ENCODE measurements at regions of chr13 and their contacts with region 1.

Region 1: DNA sequence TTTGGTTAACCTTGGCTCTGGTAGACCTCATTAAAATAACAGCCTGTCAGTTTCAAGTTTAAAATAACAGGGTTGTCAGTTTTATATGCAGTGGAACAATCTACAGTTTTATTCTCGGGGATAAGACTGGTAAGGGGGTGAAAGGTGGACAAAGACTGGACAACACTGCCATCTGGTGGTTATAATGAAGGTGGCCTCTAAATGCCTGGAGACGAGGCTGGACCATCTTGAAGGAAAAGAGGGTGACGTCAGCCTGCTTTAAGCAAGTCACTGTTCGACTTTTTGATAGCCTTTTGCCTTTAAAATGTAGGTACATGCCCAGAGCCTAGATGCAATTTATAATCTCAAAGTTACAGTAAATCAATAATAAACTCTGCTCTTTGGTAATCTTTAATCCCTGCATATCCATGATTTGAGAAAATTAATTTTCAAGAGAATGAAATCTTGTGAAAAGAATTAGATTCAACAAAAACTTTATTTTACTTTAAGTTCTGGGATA is 117.0 kb downstream of the DCT start:
- DNase-seq: peak in 9 of 10 donors; percentile 20 to 83 (median 62)

Region 2: GRCh38 chr13:94182185-94182761 is 180.2 kb before region 1 on chr13:
- intact Hi-C with region 1: loop called (anchors 5 kb)
- DNase-seq: no peak